ENCODE measurements at regions of chr18 and their contacts with region 1.

Region 1: DNA sequence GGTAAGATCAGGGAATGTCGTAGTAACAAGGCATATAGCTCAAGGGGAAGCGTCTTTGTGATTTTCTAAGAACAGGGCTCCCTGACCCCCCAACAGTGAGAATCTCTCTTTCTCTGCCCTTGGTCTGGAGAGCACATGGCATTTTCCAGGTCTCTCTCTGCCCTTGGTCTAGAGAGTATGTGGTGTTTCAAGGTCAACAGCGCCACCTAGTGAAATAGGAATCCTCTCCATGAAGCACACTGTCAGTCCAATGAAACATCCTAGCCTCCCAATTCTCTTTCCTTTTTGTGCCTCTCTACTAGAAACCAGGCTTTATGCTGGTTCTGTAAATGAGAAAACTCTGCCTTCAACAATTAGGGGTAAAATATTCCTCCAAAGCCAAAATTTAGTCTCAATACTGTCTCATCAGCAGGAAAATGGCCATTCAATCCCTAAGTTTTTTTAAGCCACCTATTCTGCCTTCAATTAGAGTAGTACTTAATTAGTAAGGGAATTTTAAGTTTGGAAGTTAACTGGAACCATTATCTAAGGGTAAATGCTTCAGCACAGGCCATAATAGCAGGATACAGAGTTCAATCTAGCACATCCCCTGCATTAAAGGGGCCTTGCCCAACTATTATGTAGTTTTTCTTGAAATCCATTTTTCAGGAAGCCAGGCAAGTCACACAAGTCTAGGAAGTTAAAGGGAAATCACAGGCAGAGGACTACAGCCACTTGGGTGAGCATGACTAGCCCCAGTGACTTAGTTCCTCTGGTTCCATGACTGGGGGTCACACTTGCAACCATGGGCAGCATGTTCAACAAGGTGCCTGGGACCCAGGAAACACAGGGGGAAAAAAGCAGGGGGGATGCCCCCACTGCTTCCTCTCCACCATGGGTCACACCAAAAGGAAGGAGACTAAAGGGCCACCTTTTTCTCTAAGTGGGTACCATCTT is 12.4 kb downstream of the DYM start:
- H3K4me3 ChIP-seq: no peak overlapping the region
- H3K27ac ChIP-seq: no peak overlapping the region
- H3K4me1 ChIP-seq: no peaks in the 10 kb centered on the region
- CTCF ChIP-seq: 0 out of 2 replicates have a peak, but pooled peaks have one; percentile 27

Region 2: DNA sequence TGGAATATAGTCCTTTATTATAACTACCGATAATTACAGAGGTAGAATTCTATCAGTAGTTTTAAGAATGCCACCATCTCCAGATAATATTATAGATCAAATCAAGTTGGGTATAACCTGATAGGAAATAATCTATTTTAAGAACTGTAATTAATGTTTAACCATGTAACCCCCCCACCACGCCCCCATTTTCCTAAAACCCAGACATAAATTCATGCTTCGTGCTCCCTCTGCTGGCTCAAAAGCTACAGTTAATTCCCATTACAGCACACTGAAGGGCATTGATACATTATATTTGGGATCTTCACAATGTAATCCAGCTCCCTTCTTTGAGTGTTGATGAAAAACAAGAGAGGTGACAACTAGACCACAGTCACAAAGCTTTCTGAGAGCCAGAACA is 269.3 kb before region 1 on chr18:
- CTCF ChIA-PET with region 1: interaction called, 12 read pairs
- POLR2A ChIA-PET with region 1: no interaction called
- H3K4me3 ChIP-seq: no peak overlapping the region
- H3K27ac ChIP-seq: no peak overlapping the region
- H3K4me1 ChIP-seq: peaks cover 9% of the 10 kb centered on the region
- CTCF ChIP-seq: peak; percentile 20; the same call in 1 of the 2 replicates

Region 3: DNA sequence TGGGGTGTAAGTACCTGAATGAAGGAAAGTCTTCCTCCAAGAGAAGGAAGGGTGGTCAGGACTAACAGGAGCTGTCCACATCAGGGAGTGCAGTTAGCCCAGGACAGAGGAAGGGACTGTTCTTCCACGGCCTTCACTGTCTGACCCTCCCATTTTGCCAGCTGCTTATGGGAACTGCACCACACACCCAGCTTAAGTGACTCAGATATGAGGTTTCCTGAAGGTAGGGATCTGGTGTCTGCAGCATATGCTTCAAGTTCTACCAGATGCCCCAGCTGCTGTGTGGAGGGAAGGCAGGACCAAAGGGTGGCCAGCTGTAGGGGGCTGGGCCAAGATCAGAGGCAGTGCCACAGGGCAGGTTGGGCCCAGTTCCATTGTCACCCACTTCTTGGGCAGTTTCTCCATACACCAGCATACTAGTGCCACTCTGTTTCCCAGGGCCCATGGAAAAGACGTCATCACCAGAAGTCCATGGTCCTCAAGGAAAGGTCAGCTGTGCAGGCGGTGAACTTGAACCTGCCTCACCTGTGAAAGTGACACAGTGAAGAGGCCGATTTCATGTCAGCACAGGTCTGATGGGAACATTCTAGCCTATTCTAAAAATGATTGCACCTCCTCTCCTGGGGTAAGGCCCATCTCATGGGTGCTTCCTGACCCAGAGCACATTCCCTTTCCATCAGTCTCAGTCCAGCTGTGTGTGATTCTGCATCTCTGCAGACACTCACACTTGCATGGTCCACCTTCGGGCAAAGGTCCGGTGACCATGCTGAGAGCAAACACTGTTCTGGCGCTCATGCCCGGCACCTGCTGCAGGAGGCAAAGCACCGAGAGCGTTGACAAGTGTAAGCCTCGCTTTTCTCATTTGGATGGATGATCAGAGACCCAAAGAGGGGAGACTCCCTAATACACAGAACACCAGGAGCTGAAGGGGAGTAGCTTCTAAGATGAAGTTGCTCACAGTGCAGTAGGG is 297.3 kb after region 1 on chr18:
- CTCF ChIA-PET with region 1: no interaction called
- POLR2A ChIA-PET with region 1: no interaction called
- H3K4me3 ChIP-seq: no peak overlapping the region
- H3K27ac ChIP-seq: no peak overlapping the region
- H3K4me1 ChIP-seq: 0 out of 2 replicates have a peak, but pooled peaks cover 4% of the 10 kb centered on the region
- CTCF ChIP-seq: no peak

Measured in HEK293 (cell line).